ENCODE measurements at regions of chr10 and their contacts with region 1.

Region 1: GRCh38 chr10:17766731-17767130 is 14.7 kb downstream of the TMEM236 start:
- DNase-seq: no peak

Region 2: DNA sequence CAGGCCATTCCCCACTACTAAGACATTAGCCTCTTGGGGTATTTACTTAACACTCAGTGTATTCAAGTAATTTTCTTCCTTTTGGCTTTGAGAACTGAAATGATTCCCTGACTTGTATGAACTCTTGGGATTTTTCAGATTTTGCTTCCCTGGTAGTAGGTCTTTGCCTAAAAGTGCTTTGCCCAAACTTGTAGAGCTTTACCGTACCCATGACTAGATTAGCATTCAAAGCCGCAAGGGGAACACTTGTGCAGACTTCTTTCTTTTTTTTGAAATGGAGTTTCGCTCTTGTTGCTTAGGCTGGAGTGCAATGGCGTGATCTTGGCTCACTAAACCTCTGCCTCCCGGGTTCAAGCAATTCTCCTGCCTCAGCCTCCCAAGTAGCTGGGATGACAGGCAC is 128.9 kb before region 1 on chr10:
- intact Hi-C with region 1: no loop called
- DNase-seq: no peak

Region 3: DNA sequence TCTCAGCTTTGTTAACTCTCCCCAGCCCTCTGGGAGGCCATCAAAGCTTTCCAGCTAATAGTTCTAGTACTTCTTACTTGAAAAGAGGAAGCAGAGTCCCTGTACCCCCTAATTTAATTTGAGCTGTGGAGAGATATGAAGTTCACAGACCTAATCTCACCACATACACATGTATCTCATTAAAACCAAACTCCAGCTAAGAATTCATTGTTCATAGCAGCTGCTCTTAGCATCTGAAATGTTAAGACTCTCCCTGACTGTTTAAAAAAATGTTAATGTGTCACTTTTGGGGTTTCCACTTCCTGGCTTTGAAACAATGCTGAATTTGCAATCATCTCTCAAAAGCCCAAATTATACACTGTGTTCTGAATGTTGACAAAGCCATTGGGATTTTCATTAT is 26.3 kb after region 1 on chr10:
- intact Hi-C with region 1: loop called in 1 of 2 experiments (anchors 1 kb)
- DNase-seq: no peak

Region 4: GRCh38 chr10:18005781-18006456 is 239.2 kb after region 1 on chr10:
- intact Hi-C with region 1: no loop called
- DNase-seq: no peak